GM23248 (cell line): ENCODE measurements at regions of chr6 and their contacts with region 1.

Region 1: DNA sequence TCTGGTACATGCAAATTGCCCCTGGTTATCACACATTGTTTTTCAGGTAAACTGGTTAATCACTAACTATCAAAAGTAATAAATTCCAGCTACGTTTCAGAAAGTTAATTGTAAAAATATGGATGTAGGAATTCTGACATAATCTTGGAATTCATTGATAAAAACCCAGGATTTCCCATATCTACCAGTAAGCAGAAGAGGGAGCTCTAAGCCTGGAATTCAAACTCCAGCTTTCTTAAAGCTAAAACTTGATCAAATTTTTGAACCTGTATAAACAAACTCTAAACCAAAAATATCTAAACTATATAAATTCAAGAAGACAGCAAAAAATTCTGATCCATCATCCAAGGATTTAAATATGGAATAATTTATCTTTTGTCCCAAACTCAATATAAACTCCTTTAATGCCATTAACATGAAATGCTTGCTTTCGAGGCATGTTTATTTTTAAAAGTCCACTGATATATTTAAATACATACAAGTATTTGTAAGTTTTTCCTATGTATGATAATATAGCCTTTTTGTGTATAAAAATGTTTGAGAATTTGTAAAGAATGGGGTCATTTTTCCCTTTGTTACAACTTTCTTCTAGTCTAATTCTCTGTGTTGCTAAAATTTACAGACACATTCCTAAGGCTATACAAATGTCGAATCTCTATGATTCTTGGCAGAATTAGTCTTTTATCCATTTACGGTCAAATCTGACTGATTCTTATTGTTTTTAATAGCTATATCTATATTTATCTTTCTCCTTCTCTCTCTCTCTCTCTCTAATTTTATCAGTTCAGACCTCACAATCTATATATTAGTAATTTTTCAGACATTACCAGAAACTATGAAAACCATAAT is 91.4 kb upstream of the RNF217 start:
- DNase-seq: peak; percentile 74
- H3K4me3 ChIP-seq: no peak overlapping the region
- H3K27ac ChIP-seq: no peak overlapping the region
- H3K4me1 ChIP-seq: 0 out of 2 replicates have a peak, but pooled peaks cover 5% of the 10 kb centered on the region
- H3K27me3 ChIP-seq: no peaks in the 10 kb centered on the region

Region 2: DNA sequence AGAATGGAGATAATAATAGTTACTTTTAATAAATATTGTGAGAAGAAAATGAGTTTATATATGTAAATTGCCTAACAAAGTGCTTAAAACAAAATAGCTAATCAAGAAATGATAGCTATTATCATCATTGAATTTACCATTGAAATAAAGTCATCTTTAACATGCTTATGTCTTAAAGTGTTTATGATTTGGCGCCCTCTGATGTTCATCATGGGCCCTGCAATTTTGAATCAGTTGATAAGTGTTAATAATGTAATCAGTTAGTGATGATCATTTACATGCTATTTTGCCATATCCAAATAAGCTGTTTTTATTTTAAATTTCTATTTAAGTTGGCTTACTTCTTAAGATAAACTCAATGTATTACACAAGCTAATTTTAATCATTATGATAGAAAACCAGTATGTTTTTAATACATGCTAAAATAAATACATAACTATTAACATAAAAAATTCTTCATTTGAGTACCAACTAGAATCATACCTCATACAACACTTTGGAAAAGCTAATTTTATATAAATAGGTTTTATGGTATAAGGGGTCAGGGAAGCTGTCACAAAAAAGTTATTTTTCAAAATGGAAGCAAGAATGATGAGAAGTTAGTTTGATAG is 243.5 kb after region 1 on chr6:
- in situ Hi-C with region 1: loop called (anchors 5 kb)
- DNase-seq: peak; percentile 68
- H3K4me3 ChIP-seq: no peak overlapping the region
- H3K27ac ChIP-seq: no peak overlapping the region
- H3K4me1 ChIP-seq: no peaks in the 10 kb centered on the region
- H3K27me3 ChIP-seq: no peaks in the 10 kb centered on the region

Region 3: DNA sequence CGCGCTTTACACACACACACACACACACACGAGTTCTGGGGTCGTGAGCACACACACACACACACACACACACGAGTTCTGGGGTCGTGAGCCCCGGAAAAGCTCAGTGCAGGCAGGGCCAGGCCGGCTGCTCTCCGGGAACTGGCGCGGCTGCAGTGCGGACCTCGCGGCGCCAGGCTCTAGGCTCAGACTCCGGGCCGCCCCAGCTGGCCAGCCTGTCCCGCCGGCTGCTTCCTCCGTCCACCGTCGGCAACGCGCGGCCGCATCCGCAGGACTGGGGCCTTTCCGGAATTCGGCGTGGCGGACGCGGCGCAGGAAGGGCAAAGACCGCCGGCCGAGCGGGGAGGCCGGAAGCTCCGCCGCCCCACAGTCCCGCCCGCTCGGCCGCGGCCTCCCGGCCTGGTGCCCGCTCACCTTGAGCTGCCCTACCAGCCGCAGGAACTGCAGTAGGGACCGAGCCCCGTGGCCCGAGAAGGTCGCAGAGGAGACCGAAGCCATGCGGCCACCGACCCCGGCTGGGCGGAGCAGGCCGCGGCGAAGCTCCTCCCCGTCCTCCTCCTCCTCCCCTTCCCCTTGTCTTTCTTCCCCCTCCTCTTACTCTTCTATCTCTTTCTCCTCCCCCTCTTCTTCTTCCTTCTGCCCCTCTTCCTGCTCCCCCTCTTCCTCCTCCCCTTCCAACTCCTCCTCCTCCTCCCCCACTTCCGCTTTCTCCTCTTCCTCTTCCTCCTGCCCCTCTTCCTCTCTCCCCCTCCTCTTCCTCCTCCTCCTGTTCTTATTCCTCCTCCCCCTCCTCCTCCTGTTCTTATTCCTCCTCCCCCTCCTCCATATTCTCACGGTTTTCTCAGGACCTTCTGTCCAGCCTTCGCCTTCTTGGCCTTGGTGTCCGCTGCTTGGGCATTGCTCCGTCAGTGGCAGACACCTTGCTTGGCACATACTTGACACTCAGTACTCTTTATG is 430.9 kb after region 1 on chr6 and contains the start of gene HDDC2:
- in situ Hi-C with region 1: loop called (anchors 10 kb)
- DNase-seq: peak; percentile 90
- H3K4me3 ChIP-seq: peak within 1 kb of the TSS; percentile 82
- H3K27ac ChIP-seq: peak within 1 kb of the TSS; percentile 61
- H3K4me1 ChIP-seq: peaks cover 19% of the 10 kb centered on the region
- H3K27me3 ChIP-seq: peaks cover 6% of the 10 kb centered on the region; the same call in 1 of the 2 replicates
- total RNA-seq, gene HDDC2: 51.1 and 55.1 TPM in 2 replicates

Region 4: GRCh38 chr6:125753218-125753936 is 882.5 kb after region 1 on chr6:
- in situ Hi-C with region 1: loop called (anchors 25 kb)
- DNase-seq: peak; percentile 43
- H3K4me3 ChIP-seq: no peak overlapping the region
- H3K27ac ChIP-seq: no peak overlapping the region
- H3K4me1 ChIP-seq: peaks cover 4% of the 10 kb centered on the region
- H3K27me3 ChIP-seq: peaks cover 66% of the 10 kb centered on the region